Left lung (tissue), 14 donors: ENCODE measurements at regions of chr11 and their contacts with region 1.

Region 1: DNA sequence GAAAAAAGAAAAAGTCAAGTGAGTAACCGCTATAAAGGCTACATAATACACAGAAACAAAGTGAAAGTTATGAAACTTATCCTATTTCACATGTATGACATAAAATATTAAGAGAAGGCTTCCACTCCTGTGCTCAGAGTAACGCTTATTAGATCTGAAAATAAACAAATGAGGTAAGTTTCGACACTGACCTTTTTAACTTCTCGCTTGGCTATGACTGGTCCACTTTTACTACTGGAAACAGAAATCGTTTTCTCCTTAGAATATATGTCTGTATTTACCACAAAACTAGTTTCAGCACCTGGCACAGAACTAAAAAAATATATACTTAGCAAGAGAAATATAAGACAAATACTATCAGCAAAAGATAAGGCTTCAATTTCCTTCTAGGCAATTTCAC is 16.4 kb downstream of the FNBP4 start:
- DNase-seq: no peak
- ATAC-seq: no peak
- H3K4me3 ChIP-seq: no peak overlapping the region
- H3K27ac ChIP-seq: no peak overlapping the region
- H3K4me1 ChIP-seq: no peaks in the 10 kb centered on the region
- H3K27me3 ChIP-seq: no peaks in the 10 kb centered on the region
- CTCF ChIP-seq: no peak

Region 2: GRCh38 chr11:47837292-47837691 is 86.6 kb after region 1 on chr11:
- intact Hi-C with region 1: loop called in 1 of 2 experiments (anchors 10 kb)
- DNase-seq: no peak
- ATAC-seq: peak; percentile 71
- H3K4me3 ChIP-seq: no peak overlapping the region
- H3K27ac ChIP-seq: no peak overlapping the region
- H3K4me1 ChIP-seq: no peaks in the 10 kb centered on the region
- H3K27me3 ChIP-seq: no peaks in the 10 kb centered on the region
- CTCF ChIP-seq: no peak

Region 3: GRCh38 chr11:47858169-47858543 is 107.4 kb after region 1 on chr11:
- intact Hi-C with region 1: no loop called
- DNase-seq: no peak
- ATAC-seq: peak; percentile 43
- H3K4me3 ChIP-seq: no peak overlapping the region
- H3K27ac ChIP-seq: no peak overlapping the region
- H3K4me1 ChIP-seq: peaks cover 10 to 26% of the 10 kb centered on the region in 2 donors
- H3K27me3 ChIP-seq: no peaks in the 10 kb centered on the region
- CTCF ChIP-seq: no peak